Lower lobe of right lung (tissue), 2 donors: ENCODE measurements at regions of chr5 and their contacts with region 1.

Region 1: DNA sequence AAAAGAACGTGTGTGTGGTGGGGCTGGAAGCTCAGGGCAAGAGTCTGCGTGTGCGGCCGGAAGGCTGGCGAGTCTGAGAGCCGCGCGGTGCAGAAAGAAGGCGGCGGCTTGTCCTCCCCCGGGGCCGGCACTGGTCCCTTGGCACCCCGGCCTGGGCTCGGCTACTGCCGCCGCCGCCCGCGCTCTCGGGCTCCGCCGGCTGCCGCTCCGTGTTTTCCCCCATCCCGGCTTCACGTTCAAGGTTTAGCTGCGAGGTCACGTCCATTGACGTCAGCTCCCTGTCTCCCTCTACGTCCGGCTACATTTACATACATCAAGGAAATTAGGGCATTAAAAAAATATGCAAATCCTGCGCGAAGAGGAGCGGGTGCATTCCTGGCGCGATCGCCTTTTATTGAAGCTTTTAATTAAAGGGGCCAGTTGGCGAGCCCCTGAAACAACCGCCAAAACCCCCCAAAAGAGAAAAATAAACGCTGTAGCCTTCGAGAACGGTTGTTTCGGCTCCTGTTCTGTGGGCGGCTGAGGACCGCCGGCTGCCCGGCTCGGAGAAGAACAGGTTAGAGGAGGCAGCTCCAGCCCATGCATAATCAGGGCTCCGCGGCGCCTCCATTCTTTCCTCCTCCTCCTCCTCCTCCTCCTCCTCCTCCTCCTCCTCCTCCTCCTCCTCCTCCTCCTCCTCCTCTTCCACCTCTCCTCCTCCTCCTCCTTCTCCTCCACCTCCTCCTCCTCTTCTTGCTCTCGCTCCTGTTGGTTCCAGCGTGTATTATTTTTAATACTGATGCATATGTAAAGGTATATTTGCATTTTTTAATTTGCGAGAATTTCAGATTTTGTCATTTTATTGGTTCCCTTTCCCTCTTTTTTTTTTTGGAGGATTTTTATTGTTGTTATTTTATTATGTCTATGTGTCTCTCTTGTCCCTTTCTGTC is 207.0 kb downstream of the MEF2C start:
- DNase-seq: no peak
- ATAC-seq: peak; percentile 34 to 59
- H3K4me3 ChIP-seq: peak overlapping the region; percentile 49
- H3K27ac ChIP-seq: no peak overlapping the region
- H3K4me1 ChIP-seq: peaks cover 30% of the 10 kb centered on the region
- H3K27me3 ChIP-seq: peaks cover 97% of the 10 kb centered on the region
- CTCF ChIP-seq: no peak

Region 2: DNA sequence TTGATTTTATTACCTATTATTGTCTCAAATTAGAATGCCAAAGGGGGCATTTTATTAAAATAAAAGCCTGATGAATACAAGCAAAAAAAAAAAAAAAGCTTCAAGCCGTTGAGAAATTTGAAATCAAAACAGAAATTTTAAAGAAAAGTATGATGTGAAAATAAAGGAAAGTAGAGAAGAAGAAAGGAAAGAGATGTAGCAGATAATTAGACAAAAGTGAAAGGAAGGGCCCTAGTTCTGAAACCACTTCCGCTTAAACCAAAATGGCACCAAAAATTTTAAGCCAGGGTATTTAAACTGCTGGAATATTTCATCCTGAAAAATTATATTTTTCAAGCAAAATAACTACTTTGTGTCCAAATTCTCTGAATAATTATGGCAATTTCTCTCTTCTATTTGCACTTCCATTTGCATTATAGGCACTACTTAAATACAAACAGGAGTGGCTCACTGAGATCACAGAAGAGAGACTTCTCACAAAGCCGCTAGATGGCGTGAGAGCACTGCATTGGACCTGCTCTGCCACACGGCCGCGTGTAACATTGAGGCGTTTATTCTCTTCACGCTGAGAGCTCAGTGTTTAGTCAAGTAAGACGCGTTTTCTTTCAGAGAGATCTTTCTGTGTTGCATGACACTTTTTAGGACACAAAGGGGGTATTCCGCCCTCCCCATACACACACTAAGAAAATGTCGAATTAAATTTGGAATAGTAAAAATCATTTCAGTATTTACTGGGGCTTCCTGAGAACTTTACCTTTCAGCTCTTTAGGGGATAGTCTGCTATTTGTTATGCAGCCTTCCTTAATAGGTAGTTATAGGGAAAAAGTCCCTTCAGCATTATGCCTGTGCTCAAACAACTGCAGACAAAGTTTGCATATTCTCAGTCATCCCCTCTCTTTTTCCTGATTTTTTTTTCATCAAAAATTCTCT is 894.9 kb before region 1 on chr5:
- intact Hi-C with region 1: loop called (anchors 5 kb)
- DNase-seq: peak; percentile 67
- ATAC-seq: peak; percentile 94 to 96
- H3K4me3 ChIP-seq: no peak overlapping the region
- H3K27ac ChIP-seq: no peak overlapping the region
- H3K4me1 ChIP-seq: no peaks in the 10 kb centered on the region
- H3K27me3 ChIP-seq: peaks cover 25% of the 10 kb centered on the region
- CTCF ChIP-seq: peak; percentile 87

Region 3: GRCh38 chr5:88401686-88402085 is 274.3 kb before region 1 on chr5:
- intact Hi-C with region 1: no loop called
- DNase-seq: no peak
- ATAC-seq: no peak
- H3K4me3 ChIP-seq: no peak overlapping the region
- H3K27ac ChIP-seq: no peak overlapping the region
- H3K4me1 ChIP-seq: no peaks in the 10 kb centered on the region
- H3K27me3 ChIP-seq: no peaks in the 10 kb centered on the region
- CTCF ChIP-seq: no peak

Region 4: GRCh38 chr5:88474574-88474973 is 201.4 kb before region 1 on chr5:
- intact Hi-C with region 1: no loop called
- DNase-seq: no peak
- ATAC-seq: no peak
- H3K4me3 ChIP-seq: no peak overlapping the region
- H3K27ac ChIP-seq: no peak overlapping the region
- H3K4me1 ChIP-seq: no peaks in the 10 kb centered on the region
- H3K27me3 ChIP-seq: no peaks in the 10 kb centered on the region
- CTCF ChIP-seq: no peak

Region 5: GRCh38 chr5:88502179-88503040 is 173.6 kb before region 1 on chr5:
- intact Hi-C with region 1: no loop called
- DNase-seq: no peak
- ATAC-seq: peak in 1 of 2 donors; percentile 56
- H3K4me3 ChIP-seq: peak overlapping the region; percentile 57
- H3K27ac ChIP-seq: no peak overlapping the region
- H3K4me1 ChIP-seq: peaks cover 8% of the 10 kb centered on the region
- H3K27me3 ChIP-seq: no peaks in the 10 kb centered on the region
- CTCF ChIP-seq: no peak

Region 6: DNA sequence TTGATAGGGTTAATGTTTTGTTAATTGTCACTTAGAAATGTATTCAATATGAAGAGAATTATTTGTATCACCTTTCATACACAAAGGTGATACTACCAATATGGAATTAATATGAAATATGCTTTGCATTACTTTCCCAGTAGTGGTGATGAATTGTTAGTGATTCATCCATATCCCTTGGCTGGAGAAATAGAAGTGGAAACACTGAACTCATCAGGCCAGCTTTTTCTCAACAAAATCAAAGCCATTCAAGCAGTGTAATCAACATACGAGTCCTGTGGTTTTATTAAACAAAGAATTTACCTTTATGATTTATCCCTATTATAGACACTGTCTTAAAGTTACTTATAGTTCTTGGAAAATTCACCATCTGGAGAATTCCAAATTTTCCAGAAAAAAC is 471.1 kb after region 1 on chr5:
- intact Hi-C with region 1: no loop called
- DNase-seq: no peak
- ATAC-seq: no peak
- H3K4me3 ChIP-seq: no peak overlapping the region
- H3K27ac ChIP-seq: no peak overlapping the region
- H3K4me1 ChIP-seq: no peaks in the 10 kb centered on the region
- H3K27me3 ChIP-seq: no peaks in the 10 kb centered on the region
- CTCF ChIP-seq: no peak